Natural killer cell (primary cell): ENCODE measurements at regions of chr12 and their contacts with region 1.

Region 1: GRCh38 chr12:56104109-56104814 is at the start of gene PA2G4:
- DNase-seq: peak; percentile 87 to 97
- ATAC-seq: peak; percentile 92 to 97 (median 93)
- H3K4me3 ChIP-seq: peak within 1 kb of the TSS; percentile 81
- H3K4me3 Mint-ChIP-seq: peak within 1 kb of the TSS; percentile 100
- H3K27ac ChIP-seq: peak within 1 kb of the TSS; percentile 80
- H3K27ac Mint-ChIP-seq: peak within 1 kb of the TSS; percentile 97 to 99
- H3K4me1 ChIP-seq: peaks cover 37% of the 10 kb centered on the region
- H3K4me1 Mint-ChIP-seq: peaks cover 52 to 56% of the 10 kb centered on the region in 2 donors
- H3K27me3 ChIP-seq: no peaks in the 10 kb centered on the region
- H3K27me3 Mint-ChIP-seq: no peaks in the 10 kb centered on the region
- CTCF ChIP-seq: no peak
- total RNA-seq, gene PA2G4: 78.5 to 86.4 (median 79.7) TPM

Region 2: GRCh38 chr12:55817346-55818139 is 286.7 kb before region 1 on chr12 and contains the starts of genes ORMDL2 and SARNP:
- intact Hi-C with region 1: loop called (anchors 5 kb)
- DNase-seq: peak; percentile 88 to 99
- ATAC-seq: peak; percentile 91 to 97 (median 92)
- H3K4me3 ChIP-seq: peak within 1 kb of the TSS; percentile 85
- H3K4me3 Mint-ChIP-seq: no peak within 1 kb of the TSS
- H3K27ac ChIP-seq: peak within 1 kb of the TSS; percentile 78
- H3K27ac Mint-ChIP-seq: no peak within 1 kb of the TSS
- H3K4me1 ChIP-seq: peaks cover 22% of the 10 kb centered on the region
- H3K4me1 Mint-ChIP-seq: peaks cover 22 to 29% of the 10 kb centered on the region in 2 donors
- H3K27me3 ChIP-seq: no peaks in the 10 kb centered on the region
- H3K27me3 Mint-ChIP-seq: no peaks in the 10 kb centered on the region
- CTCF ChIP-seq: no peak
- total RNA-seq, gene ORMDL2: 21.3 to 36.3 (median 23.1) TPM
- total RNA-seq, gene SARNP: 50.5 to 57.0 (median 51.2) TPM

Region 3: DNA sequence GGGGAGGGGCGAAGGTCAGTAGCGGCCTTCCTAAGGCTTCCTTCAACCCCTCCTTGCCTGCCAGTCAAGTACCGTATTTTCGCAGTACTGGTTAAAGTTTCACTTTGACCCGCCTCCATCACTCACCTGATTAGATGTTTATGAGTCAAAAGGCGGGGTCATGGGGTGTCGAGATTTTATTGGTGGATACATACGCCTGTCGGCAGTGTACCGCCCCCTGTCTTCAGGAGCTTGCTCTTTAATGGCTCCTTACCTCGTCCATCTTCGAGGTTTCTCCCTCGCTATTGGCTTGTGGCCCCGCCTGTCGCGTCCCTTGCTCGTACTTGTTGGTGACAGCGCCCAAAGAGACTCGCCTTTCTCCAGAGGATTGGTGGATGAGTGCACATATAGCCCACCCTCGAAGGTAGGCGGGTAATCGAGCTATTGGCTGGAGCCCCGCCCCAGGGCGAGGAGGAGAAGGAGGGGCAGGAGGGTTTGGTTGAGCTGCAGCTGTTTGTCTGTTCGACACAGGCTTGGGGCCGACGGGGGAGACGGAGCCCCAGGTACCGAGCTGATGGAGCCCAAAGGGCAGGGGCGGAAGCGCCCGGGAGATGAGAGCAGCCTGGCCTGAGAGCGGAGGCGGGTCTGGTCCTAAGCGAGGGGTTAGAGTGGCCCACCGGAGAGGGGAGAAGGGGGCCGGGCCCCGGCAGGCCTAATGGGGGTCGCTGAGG is 130.5 kb before region 1 on chr12 and contains the start of gene RAB5B:
- intact Hi-C with region 1: loop called (anchors 1 kb)
- DNase-seq: peak; percentile 93 to 99
- ATAC-seq: peak; percentile 85 to 95 (median 85)
- H3K4me3 ChIP-seq: peak within 1 kb of the TSS; percentile 83
- H3K4me3 Mint-ChIP-seq: no peak within 1 kb of the TSS
- H3K27ac ChIP-seq: peak within 1 kb of the TSS; percentile 84
- H3K27ac Mint-ChIP-seq: no peak within 1 kb of the TSS
- H3K4me1 ChIP-seq: peaks cover 14% of the 10 kb centered on the region
- H3K4me1 Mint-ChIP-seq: peaks cover 18 to 24% of the 10 kb centered on the region in 2 donors
- H3K27me3 ChIP-seq: no peaks in the 10 kb centered on the region
- H3K27me3 Mint-ChIP-seq: no peaks in the 10 kb centered on the region
- CTCF ChIP-seq: no peak
- total RNA-seq, gene RAB5B: 69.4 to 80.0 (median 78.2) TPM

Region 4: GRCh38 chr12:55996715-55997534 is 107.3 kb before region 1 on chr12 and contains the start of gene SUOX:
- intact Hi-C with region 1: loop called (anchors 1 kb)
- DNase-seq: peak; percentile 39 to 57
- ATAC-seq: peak; percentile 93
- H3K4me3 ChIP-seq: peak within 1 kb of the TSS; percentile 42
- H3K4me3 Mint-ChIP-seq: peak within 1 kb of the TSS; percentile 89
- H3K27ac ChIP-seq: peak within 1 kb of the TSS; percentile 15
- H3K27ac Mint-ChIP-seq: peak within 1 kb of the TSS; percentile 65 to 84
- H3K4me1 ChIP-seq: peaks cover 21% of the 10 kb centered on the region
- H3K4me1 Mint-ChIP-seq: peaks cover 14 to 20% of the 10 kb centered on the region in 2 donors
- H3K27me3 ChIP-seq: no peaks in the 10 kb centered on the region
- H3K27me3 Mint-ChIP-seq: no peaks in the 10 kb centered on the region
- CTCF ChIP-seq: no peak
- total RNA-seq, gene SUOX: 11.0 to 15.9 (median 14.6) TPM

Region 5: DNA sequence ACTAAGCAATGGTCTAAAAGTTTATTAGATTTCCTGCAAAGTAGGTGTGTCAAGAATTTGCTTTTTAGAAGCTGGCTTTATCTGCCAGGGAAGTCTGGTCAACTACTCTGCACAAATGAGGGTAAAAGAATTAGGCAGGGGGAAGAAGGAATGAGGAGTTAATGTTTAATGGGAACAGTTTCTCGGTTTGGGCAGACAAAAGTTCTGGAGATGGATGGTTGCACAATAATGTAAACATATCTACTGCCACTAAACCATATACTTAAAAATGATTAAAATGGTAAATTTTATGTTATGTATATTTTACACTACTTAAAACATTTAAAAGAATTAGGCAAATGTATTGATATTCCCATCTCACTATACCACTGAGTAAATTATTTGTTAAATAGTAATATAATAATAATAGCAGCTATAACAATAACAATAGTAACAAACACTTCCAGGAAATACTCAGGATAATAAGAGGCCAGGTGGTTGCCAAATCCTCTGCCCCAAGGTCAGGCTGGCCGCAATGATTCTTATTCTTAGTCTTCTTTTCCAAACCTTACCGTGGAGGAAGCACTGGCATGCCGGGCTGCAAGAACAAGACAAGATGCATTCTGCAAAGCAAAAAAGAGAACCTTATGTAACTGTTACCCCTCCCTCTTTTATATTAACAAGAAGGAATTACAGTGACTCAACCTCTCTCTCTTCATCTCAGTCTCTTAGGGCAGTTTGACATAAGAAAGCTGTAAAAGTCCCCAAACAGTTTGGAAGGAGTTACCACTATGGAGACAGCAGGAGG is 182.0 kb after region 1 on chr12:
- intact Hi-C with region 1: no loop called
- DNase-seq: no peak
- ATAC-seq: no peak
- H3K4me3 ChIP-seq: no peak overlapping the region
- H3K4me3 Mint-ChIP-seq: no peak overlapping the region
- H3K27ac ChIP-seq: no peak overlapping the region
- H3K27ac Mint-ChIP-seq: no peak overlapping the region
- H3K4me1 ChIP-seq: no peaks in the 10 kb centered on the region
- H3K4me1 Mint-ChIP-seq: peaks cover 2 to 8% of the 10 kb centered on the region in 2 donors
- H3K27me3 ChIP-seq: no peaks in the 10 kb centered on the region
- H3K27me3 Mint-ChIP-seq: no peaks in the 10 kb centered on the region
- CTCF ChIP-seq: no peak

Region 6: DNA sequence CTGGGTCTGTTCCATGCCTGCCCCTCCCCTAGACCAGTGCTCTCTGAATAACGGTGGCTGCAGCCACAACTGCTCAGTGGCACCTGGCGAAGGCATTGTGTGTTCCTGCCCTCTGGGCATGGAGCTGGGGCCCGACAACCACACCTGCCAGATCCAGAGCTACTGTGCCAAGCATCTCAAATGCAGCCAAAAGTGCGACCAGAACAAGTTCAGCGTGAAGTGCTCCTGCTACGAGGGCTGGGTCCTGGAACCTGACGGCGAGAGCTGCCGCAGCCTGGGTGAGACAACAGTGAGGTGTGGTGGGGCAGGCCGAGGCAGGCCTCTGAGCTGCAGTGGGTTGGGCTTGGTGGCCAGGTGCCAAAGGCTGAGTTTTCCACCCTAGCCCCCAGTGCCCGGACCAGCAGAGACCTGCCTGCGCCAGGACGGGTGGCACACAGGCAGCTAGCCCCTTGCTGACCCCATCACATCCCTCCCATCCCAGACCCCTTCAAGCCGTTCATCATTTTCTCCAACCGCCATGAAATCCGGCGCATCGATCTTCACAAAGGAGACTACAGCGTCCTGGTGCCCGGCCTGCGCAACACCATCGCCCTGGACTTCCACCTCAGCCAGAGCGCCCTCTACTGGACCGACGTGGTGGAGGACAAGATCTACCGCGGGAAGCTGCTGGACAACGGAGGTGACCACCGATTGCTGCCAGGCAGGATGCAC is 1071.3 kb after region 1 on chr12:
- intact Hi-C with region 1: no loop called
- DNase-seq: peak; percentile 35 to 59
- ATAC-seq: peak in 2 of 3 donors; percentile 44 to 57
- H3K4me3 ChIP-seq: no peak overlapping the region
- H3K4me3 Mint-ChIP-seq: no peak overlapping the region
- H3K27ac ChIP-seq: no peak overlapping the region
- H3K27ac Mint-ChIP-seq: no peak overlapping the region
- H3K4me1 ChIP-seq: no peaks in the 10 kb centered on the region
- H3K4me1 Mint-ChIP-seq: peaks cover 0 to 5% of the 10 kb centered on the region in 2 donors
- H3K27me3 ChIP-seq: no peaks in the 10 kb centered on the region
- H3K27me3 Mint-ChIP-seq: no peaks in the 10 kb centered on the region
- CTCF ChIP-seq: peak; percentile 32